Right ventricle myocardium superior (tissue), 1 donor: ENCODE measurements at regions of chr3 and their contacts with region 1.

Region 1: DNA sequence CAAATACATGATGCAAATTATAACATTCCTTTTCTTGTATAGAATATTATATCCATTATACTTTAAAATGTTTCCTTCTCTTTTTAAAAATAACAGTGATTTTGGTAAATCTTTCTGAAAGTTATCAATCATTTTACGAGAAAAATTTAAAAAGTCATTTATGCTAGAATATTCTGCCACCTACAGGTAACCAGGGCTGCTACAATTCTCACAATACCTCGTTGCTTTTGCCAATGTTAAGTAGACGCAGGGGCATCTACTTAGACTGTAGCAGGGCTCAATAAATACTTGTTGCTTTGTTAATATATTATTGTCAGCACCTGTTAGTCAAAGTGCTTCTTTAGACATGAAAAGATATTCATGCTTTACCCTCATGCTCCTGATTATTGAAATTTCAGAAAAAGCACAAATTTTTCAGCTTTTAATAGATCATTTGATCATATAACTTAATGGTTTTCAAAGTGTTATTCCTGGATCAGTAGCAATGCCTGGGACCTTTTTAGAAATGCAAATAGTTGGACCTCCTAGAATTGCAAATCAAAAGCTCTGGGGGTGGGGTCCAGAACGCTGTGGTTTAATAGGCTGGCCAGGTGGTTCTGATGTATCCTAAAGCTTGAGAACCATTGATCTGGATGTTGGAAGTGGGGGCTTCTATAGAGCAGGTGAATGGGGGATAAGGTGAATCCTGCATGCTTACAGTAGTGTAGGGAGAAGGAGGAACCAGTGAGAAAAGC is 223.6 kb upstream of the PDZRN3 start:
- DNase-seq: no peak
- ATAC-seq: peak; percentile 71

Region 2: GRCh38 chr3:73508330-73508954 is 339.9 kb before region 1 on chr3:
- intact Hi-C with region 1: loop called (anchors 5 kb)
- DNase-seq: no peak
- ATAC-seq: peak; percentile 65

Region 3: GRCh38 chr3:73624821-73625665 is 223.3 kb before region 1 on chr3 and contains the start of gene PDZRN3:
- intact Hi-C with region 1: loop called (anchors 10 kb)
- DNase-seq: peak; percentile 78
- ATAC-seq: peak; percentile 44
- total RNA-seq, gene PDZRN3: 130 TPM

Region 4: DNA sequence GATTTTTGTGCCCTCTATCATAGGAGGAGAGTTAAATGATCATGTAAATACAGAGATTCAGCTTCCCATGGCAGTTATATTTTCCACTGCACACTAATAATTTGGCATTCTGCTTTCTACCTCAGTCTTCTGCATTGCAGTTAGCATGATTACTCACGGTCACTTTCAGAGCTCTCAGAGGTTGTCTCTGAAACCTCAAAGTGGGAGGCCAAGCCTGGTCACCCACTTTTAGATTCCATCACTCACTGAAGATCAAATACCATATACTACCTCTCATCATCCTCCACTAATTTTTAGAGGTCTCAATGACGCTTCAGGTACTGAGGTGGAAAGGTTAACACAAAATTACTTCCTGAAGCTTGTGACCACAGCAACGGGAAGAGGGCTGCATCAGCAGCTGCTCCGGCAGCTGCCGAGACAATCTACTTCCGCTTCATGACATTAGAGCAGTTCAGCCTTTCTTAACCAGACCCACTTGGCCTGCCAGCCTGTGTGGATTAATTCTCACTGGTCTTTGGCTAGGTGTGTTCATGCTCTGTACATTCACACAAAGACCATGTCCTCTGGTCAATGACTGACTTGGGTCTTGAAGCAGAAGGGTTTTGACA is 192.8 kb after region 1 on chr3:
- intact Hi-C with region 1: no loop called
- DNase-seq: no peak
- ATAC-seq: no peak